Lower leg skin (tissue), 4 donors: ENCODE measurements at regions of chr12 and their contacts with region 1.

Region 1: DNA sequence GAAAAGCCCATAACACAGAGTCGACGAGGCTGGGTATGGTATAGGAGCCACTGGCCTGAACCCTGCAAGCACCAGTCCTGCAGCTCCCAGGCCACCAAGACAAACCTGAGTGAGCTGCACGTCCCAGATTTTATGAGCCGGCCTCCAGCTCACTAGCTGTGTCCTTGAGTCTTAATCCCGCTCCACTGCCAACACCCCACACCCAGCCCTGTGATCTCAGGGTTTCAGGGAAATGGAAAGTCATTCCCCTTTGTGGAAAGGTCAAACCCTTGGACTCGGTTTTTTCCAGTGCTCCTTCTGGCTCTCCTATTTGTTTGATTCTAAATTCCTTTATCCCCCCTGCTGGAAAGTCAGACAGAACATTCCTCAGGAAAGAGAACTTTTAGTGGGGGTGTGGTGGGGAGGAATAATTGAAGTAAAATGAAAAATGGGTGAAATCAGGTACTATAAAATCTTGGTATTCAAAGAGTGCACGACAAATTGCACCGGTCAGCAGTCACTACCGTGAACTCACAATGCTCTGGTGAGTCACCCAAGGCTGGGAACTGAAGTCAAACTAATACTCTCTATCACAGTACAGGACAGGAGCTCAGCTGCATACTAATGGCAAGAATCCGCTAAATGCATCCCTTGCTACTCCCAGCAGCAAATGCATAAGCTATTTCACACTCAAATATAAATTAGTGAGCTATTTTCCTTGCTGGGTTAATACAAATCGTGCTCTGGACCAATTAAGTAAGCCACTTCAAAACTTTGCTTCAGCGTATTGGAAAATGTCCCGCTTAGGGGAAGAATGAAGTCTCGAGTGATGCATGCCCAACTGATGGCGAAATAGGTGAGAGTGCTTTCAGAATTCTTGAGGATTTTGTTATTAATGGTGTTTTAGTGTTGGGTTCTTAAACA is 9.0 kb downstream of the PITPNM2 start:
- DNase-seq: peak in 1 of 2 donors; percentile 86
- H3K4me3 ChIP-seq: no peak overlapping the region
- CTCF ChIP-seq: no peak
- POLR2A ChIP-seq: no peak

Region 2: DNA sequence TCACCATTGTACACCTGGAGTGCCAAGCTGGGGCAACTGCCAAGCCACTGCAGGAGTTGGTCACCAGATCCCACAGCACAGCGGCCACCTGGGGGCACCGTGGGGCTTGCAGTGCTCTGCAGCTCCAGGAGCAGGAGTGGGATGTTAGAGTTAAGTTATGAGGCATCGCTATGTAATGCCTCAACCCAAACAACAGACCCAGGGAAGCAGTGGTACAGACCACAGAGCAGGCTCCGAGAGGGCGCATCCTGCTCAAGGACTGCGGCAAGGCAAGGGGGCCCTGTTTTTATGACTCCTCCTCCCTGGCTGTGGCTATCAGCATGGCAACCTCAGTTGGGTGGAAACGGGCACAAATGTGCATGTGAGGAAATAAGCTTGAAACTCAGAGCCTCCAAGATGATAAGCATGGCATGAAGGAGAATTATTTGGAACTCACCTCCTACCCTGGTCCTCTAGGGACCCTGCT is 98.3 kb before region 1 on chr12:
- intact Hi-C with region 1: loop called (anchors 10 kb)
- DNase-seq: peak; percentile 45 to 91
- H3K4me3 ChIP-seq: no peak overlapping the region
- CTCF ChIP-seq: peak in 1 of 3 donors; percentile 33
- POLR2A ChIP-seq: no peak